ENCODE measurements at regions of chr5 and their contacts with region 1.

Region 1: DNA sequence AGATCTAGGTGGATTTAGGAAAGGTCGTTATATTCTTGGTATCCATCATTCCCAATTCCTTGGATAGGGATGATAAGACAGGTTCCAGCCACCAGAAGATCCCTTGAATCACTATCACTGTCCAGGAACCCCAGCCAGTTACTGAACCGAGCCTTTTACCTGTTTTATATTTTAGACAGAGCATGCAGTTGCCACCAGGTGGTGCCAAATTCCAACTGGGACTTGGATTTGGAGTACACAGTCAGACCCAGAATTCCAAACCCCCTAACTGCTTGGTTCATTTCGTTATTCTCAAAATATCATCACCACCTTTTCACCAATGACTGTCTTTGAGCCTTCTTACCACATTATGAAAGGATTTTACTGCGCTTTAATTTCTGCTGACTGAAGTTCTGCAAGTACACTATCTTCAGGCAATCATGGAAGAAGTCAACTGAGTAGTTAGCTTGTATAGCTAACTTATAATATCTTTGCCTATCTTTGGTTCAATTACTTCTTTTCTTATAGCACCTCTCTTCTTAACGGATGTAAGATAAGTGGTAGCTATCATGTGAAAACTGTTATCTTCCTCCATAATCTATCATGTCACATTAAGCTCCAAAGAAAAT is 191.8 kb downstream of the PRR16 start:
- DNase-seq: peak; percentile 11 to 60 (median 17)
- ATAC-seq: peak; percentile 86
- H3K4me3 ChIP-seq: no peak overlapping the region
- H3K27ac ChIP-seq: no peak overlapping the region
- H3K4me1 ChIP-seq: no peaks in the 10 kb centered on the region
- H3K27me3 ChIP-seq: no peaks in the 10 kb centered on the region
- CTCF ChIP-seq: peak; percentile 46 to 57 (median 54); a peak in 5 of 6 replicates
- EP300 ChIP-seq: no peak
- POLR2A ChIP-seq: no peak
- RAD21 ChIP-seq: peak; percentile 45 to 62

Region 2: GRCh38 chr5:120452471-120452870 is 203.5 kb before region 1 on chr5:
- CTCF ChIA-PET with region 1: no interaction called
- POLR2A ChIA-PET with region 1: no interaction called
- in situ Hi-C with region 1: no loop called
- intact Hi-C with region 1: no loop called
- DNase-seq: no peak
- ATAC-seq: no peak
- H3K4me3 ChIP-seq: no peak overlapping the region
- H3K27ac ChIP-seq: no peak overlapping the region
- H3K4me1 ChIP-seq: no peaks in the 10 kb centered on the region
- H3K27me3 ChIP-seq: no peaks in the 10 kb centered on the region
- CTCF ChIP-seq: no peak
- EP300 ChIP-seq: no peak
- POLR2A ChIP-seq: no peak
- RAD21 ChIP-seq: no peak

Region 3: GRCh38 chr5:120818128-120818527 is 162.2 kb after region 1 on chr5:
- CTCF ChIA-PET with region 1: no interaction called
- POLR2A ChIA-PET with region 1: no interaction called
- in situ Hi-C with region 1: no loop called
- intact Hi-C with region 1: no loop called
- DNase-seq: peak in 2 of 4 experiments; percentile 4 to 5
- ATAC-seq: no peak; the same call in 2 of the 3 replicates
- H3K4me3 ChIP-seq: no peak overlapping the region
- H3K27ac ChIP-seq: no peak overlapping the region
- H3K4me1 ChIP-seq: no peaks in the 10 kb centered on the region
- H3K27me3 ChIP-seq: no peaks in the 10 kb centered on the region
- CTCF ChIP-seq: no peak
- EP300 ChIP-seq: no peak
- POLR2A ChIP-seq: no peak
- RAD21 ChIP-seq: 0 out of 4 replicates have a peak, but pooled peaks of 1 of the 2 experiments have one; percentile 16

Region 4: DNA sequence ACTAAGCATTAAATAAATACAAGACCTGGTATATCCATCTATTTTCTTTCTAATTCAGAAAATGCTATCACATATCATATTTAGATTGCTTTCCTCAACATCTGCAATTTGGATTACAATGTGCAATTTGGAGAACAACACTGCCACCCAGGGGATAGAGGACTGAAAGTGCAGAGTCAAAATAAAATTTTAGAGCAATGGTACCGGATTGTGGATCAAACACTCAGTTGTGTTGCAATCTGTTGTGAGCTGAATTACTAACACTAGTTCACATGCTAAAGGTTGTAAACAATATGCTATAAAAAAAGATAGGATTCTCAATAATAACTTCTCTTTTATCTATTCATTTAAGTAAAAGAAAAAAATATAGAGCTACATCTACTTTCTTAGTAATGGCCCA is 1293.9 kb after region 1 on chr5:
- CTCF ChIA-PET with region 1: no interaction called
- POLR2A ChIA-PET with region 1: no interaction called
- in situ Hi-C with region 1: no loop called
- intact Hi-C with region 1: loop called (anchors 5 kb)
- DNase-seq: peak; percentile 17 to 62 (median 34)
- ATAC-seq: peak; percentile 77
- H3K4me3 ChIP-seq: no peak overlapping the region
- H3K27ac ChIP-seq: no peak overlapping the region
- H3K4me1 ChIP-seq: 0 out of 5 replicates have a peak, but pooled peaks cover 0 to 6% of the 10 kb centered on the region in 2 experiments
- H3K27me3 ChIP-seq: no peaks in the 10 kb centered on the region
- CTCF ChIP-seq: peak; percentile 19 to 69 (median 58); a peak in 3 of 6 replicates
- EP300 ChIP-seq: no peak
- POLR2A ChIP-seq: no peak
- RAD21 ChIP-seq: peak; percentile 71 to 83

Measured in K562 (cell line).